ENCODE measurements at regions of chr3 and their contacts with region 1.

Region 1: DNA sequence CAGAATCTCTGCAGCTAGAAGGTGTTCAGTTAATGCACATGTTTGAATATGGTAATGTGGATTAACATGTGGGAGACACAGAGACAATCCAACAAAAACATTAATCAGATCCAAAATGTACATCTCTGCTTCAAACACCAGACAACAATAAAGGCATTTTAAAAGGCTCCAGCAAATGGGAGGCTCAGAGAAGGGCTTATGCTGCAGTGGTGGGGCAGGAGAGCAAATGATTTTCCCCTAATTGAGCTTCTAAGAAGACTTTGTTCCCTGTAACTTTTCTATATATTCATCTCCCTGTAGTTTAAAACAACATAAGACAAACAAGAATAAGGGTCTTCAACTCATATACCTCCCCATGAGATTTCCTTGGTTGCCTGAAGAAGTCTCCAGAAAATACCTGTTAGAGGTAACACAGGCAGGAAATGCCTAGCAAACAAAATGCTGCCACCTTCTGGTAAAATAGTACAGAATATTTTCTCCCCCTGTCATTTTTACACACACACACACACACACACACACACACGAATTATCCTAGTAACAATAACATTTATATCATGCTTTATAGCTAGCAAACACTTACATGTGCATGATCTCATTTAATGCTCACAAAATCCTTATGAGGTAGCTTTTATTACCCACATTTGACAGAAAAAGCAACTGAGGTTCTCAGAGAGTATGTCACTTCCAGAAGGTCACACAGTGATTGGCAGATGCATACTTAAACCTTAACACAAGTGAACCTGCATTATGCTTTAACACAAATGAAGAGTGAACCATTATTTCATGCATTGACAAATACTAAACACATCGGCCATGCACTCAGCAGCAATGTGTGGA is 123.4 kb upstream of the MB21D2 start:
- DNase-seq: peak; percentile 11 to 24 (median 14)
- ATAC-seq: peak; percentile 55; the same call in 2 of the 3 replicates
- H3K4me3 ChIP-seq: no peak overlapping the region
- H3K27ac ChIP-seq: no peak overlapping the region
- H3K4me1 ChIP-seq: no peaks in the 10 kb centered on the region
- H3K27me3 ChIP-seq: no peaks in the 10 kb centered on the region
- CTCF ChIP-seq: peak; percentile 10 to 47 (median 28); a peak in 2 of 6 replicates
- EP300 ChIP-seq: no peak
- POLR2A ChIP-seq: no peak
- RAD21 ChIP-seq: peak; percentile 35 to 59; a peak in 3 of 4 replicates

Region 2: GRCh38 chr3:192467230-192468140 is 573.6 kb before region 1 on chr3:
- CTCF ChIA-PET with region 1: no interaction called
- POLR2A ChIA-PET with region 1: no interaction called
- in situ Hi-C with region 1: no loop called
- intact Hi-C with region 1: loop called (anchors 10 kb)
- DNase-seq: peak; percentile 48 to 65 (median 60)
- ATAC-seq: peak; percentile 93
- H3K4me3 ChIP-seq: no peak overlapping the region
- H3K27ac ChIP-seq: no peak overlapping the region
- H3K4me1 ChIP-seq: no peaks in the 10 kb centered on the region
- H3K27me3 ChIP-seq: no peaks in the 10 kb centered on the region
- CTCF ChIP-seq: peak; percentile 59 to 83 (median 78)
- EP300 ChIP-seq: no peak
- POLR2A ChIP-seq: no peak
- RAD21 ChIP-seq: peak; percentile 67 to 75

Region 3: GRCh38 chr3:192566706-192567290 is 474.3 kb before region 1 on chr3:
- CTCF ChIA-PET with region 1: no interaction called
- POLR2A ChIA-PET with region 1: no interaction called
- in situ Hi-C with region 1: no loop called
- intact Hi-C with region 1: loop called (anchors 1 kb)
- DNase-seq: peak; percentile 38 to 65 (median 53)
- ATAC-seq: peak; percentile 88
- H3K4me3 ChIP-seq: no peak overlapping the region
- H3K27ac ChIP-seq: no peak overlapping the region
- H3K4me1 ChIP-seq: no peaks in the 10 kb centered on the region
- H3K27me3 ChIP-seq: no peaks in the 10 kb centered on the region
- CTCF ChIP-seq: peak; percentile 37 to 80 (median 79); a peak in 5 of 6 replicates
- EP300 ChIP-seq: no peak
- POLR2A ChIP-seq: no peak
- RAD21 ChIP-seq: peak; percentile 75 to 90

Region 4: GRCh38 chr3:192825657-192826200 is 215.3 kb before region 1 on chr3:
- CTCF ChIA-PET with region 1: no interaction called
- POLR2A ChIA-PET with region 1: no interaction called
- in situ Hi-C with region 1: loop called (anchors 10 kb)
- intact Hi-C with region 1: no loop called
- DNase-seq: no peak
- ATAC-seq: peak; percentile 48; the same call in 1 of the 3 replicates
- H3K4me3 ChIP-seq: no peak overlapping the region
- H3K27ac ChIP-seq: no peak overlapping the region
- H3K4me1 ChIP-seq: no peaks in the 10 kb centered on the region
- H3K27me3 ChIP-seq: no peaks in the 10 kb centered on the region; a peak in 1 of 5 replicates
- CTCF ChIP-seq: no peak
- EP300 ChIP-seq: no peak
- POLR2A ChIP-seq: no peak
- RAD21 ChIP-seq: no peak